ENCODE measurements at regions of chr13 and their contacts with region 1.

Region 1: GRCh38 chr13:28204690-28205443 is 66.5 kb downstream of the PAN3 start:
- DNase-seq: no peak
- ATAC-seq: no peak
- H3K4me3 ChIP-seq: no peak overlapping the region
- H3K27ac ChIP-seq: no peak overlapping the region
- H3K4me1 ChIP-seq: no peaks in the 10 kb centered on the region
- H3K27me3 ChIP-seq: no peaks in the 10 kb centered on the region
- CTCF ChIP-seq: no peak
- POLR2A ChIP-seq: no peak
- RAD21 ChIP-seq: no peak

Region 2: GRCh38 chr13:27461940-27462584 is 742.8 kb before region 1 on chr13:
- CTCF ChIA-PET with region 1: interaction called, 11 read pairs
- POLR2A ChIA-PET with region 1: no interaction called
- dilution Hi-C with region 1: no loop called
- in situ Hi-C with region 1: no loop called
- intact Hi-C with region 1: no loop called
- DNase-seq: no peak
- ATAC-seq: no peak
- H3K4me3 ChIP-seq: no peak overlapping the region
- H3K27ac ChIP-seq: no peak overlapping the region
- H3K4me1 ChIP-seq: no peaks in the 10 kb centered on the region
- H3K27me3 ChIP-seq: peaks cover 10% of the 10 kb centered on the region
- CTCF ChIP-seq: no peak
- POLR2A ChIP-seq: no peak
- RAD21 ChIP-seq: no peak